Naive thymus-derived CD4-positive, alpha-beta T cell (primary cell): ENCODE measurements at regions of chr12 and their contacts with region 1.

Region 1: DNA sequence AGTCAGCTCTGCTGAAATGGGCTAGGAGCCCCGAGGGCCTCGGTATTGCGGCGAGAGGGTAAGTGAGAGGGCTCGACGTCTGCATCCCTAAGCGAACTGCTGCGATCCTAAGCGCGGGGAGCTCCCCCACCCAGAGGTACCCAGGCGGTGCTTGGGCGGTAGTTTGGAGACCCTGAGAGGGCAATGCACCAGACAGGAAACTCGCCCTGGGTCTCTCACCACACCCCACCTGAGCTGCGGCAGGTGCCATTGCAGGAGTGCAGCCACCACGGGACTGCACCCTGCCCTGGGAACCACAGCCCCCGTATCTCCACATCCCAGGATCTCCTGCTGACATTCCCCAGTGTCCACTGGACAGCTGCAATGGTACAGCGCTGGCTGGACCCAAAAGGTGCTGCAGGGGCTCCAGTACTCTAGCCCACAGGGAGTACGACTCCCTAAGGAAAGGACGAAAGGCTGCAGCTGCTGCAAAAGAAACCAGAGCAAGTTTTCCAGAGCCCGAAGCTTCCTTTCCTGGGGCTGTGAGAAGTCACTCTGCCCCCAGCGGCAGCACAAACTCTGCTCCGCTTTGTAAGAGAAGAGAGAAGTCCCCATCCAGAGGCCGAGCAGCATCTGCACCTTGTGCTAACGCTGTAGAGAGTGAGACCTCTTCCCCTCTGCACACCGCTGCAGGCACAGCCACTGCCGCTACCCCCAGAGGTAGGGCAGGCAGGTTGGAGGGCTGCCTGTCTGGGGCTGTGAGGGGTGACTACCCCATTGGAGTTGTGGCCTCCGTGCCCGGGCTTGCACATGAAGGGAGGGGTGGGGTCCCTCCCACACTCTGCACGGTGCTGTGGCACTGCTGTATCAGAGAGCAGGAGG is 31.1 kb upstream of the MON2 start:
- DNase-seq: peak; percentile 8 to 38 (median 26)
- ATAC-seq: peak; percentile 77
- H3K4me3 ChIP-seq: peak overlapping the region; percentile 71
- H3K4me3 Mint-ChIP-seq: peak overlapping the region; percentile 79 to 93 (median 89)
- H3K27ac ChIP-seq: no peak overlapping the region
- H3K27ac Mint-ChIP-seq: peak overlapping the region in 3 of 9 donors; percentile 33 to 71 (median 36)
- H3K4me1 ChIP-seq: peaks cover 9 to 10% of the 10 kb centered on the region in 2 donors
- H3K4me1 Mint-ChIP-seq: peaks cover 9 to 24% (median 18%) of the 10 kb centered on the region in 7 donors
- H3K27me3 ChIP-seq: no peaks in the 10 kb centered on the region
- H3K27me3 Mint-ChIP-seq: peaks cover 19 to 67% (median 29%) of the 10 kb centered on the region in 5 donors

Region 2: DNA sequence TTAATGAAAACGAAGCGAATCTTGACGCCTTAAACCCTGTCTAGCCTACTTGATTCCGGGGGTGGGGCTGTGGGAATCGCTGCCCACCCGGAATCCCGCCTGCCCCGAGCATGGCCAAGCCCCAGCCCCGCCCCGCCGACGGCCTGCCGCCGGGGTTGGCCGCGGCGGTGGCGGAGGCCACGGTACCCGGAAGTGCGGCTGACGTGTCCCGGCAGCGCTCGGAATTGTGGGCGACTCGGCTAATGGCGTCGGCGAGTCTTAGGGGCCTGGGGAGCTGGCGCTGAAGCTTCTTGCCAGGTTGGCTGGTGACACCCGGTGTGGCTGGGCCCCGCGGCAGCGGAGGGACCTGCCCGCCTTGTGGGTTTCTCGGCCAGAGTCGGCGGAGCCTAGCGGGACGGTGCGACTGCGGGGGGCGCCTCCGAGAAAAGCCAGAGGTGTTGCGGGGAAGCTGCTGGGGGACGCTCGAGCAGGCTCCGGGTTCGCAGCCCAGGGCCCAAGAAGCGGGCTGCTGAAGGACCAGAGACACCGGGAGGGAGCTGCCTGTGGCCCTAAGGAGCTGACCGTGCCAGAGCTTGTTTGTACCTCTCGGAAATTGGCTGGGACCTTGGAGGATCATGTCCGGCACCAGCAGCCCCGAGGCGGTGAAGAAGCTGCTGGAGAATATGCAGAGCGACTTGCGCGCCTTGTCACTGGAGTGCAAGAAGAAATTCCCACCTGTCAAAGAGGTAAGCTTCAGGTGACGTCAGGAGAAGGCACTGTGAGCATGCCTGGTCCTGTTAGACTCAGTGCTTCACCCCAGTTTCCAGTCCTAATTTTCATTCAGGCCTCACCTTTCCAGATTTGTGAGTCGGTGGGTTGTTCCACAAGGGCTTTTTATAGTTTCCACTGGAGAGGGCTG is 31.3 kb after region 1 on chr12 and contains the start of gene MON2:
- CTCF ChIA-PET with region 1: interaction called, 11 read pairs
- POLR2A ChIA-PET with region 1: no interaction called
- intact Hi-C with region 1: loop called in 1 of 2 experiments (anchors 1 kb)
- DNase-seq: peak; percentile 79 to 89 (median 84)
- ATAC-seq: peak; percentile 98
- H3K4me3 ChIP-seq: peak within 1 kb of the TSS; percentile 90
- H3K4me3 Mint-ChIP-seq: peak within 1 kb of the TSS; percentile 85 to 99 (median 94)
- H3K27ac ChIP-seq: peak within 1 kb of the TSS; percentile 88
- H3K27ac Mint-ChIP-seq: peak within 1 kb of the TSS; percentile 86 to 98 (median 96)
- H3K4me1 ChIP-seq: peaks cover 8 to 17% of the 10 kb centered on the region in 2 donors
- H3K4me1 Mint-ChIP-seq: peaks cover 12 to 30% (median 21%) of the 10 kb centered on the region in 7 donors
- H3K27me3 ChIP-seq: peaks cover 0 to 4% of the 10 kb centered on the region in 2 donors
- H3K27me3 Mint-ChIP-seq: peaks cover 0 to 4% (median 3%) of the 10 kb centered on the region in 5 donors
- total RNA-seq, gene MON2: 50.0 to 96.3 (median 76.0) TPM

Region 3: GRCh38 chr12:62581288-62582064 is 145.9 kb after region 1 on chr12:
- CTCF ChIA-PET with region 1: interaction called, 4 read pairs
- POLR2A ChIA-PET with region 1: no interaction called
- intact Hi-C with region 1: loop called (anchors 1 kb)
- DNase-seq: peak in 6 of 9 donors; percentile 18 to 53 (median 34)
- ATAC-seq: peak; percentile 81
- H3K4me3 ChIP-seq: no peak overlapping the region
- H3K4me3 Mint-ChIP-seq: no peak overlapping the region
- H3K27ac ChIP-seq: no peak overlapping the region
- H3K27ac Mint-ChIP-seq: peak overlapping the region in 1 of 9 donors; percentile 21
- H3K4me1 ChIP-seq: no peaks in the 10 kb centered on the region
- H3K4me1 Mint-ChIP-seq: peaks cover 0 to 2% (median 0%) of the 10 kb centered on the region in 7 donors
- H3K27me3 ChIP-seq: no peaks in the 10 kb centered on the region
- H3K27me3 Mint-ChIP-seq: no peaks in the 10 kb centered on the region

Region 4: GRCh38 chr12:62799126-62799736 is 363.7 kb after region 1 on chr12:
- CTCF ChIA-PET with region 1: interaction called, 59 read pairs
- POLR2A ChIA-PET with region 1: no interaction called
- intact Hi-C with region 1: loop called (anchors 1 kb)
- DNase-seq: peak in 8 of 9 donors; percentile 5 to 53 (median 40)
- ATAC-seq: peak; percentile 81
- H3K4me3 ChIP-seq: no peak overlapping the region
- H3K4me3 Mint-ChIP-seq: no peak overlapping the region
- H3K27ac ChIP-seq: no peak overlapping the region
- H3K27ac Mint-ChIP-seq: no peak overlapping the region
- H3K4me1 ChIP-seq: no peaks in the 10 kb centered on the region
- H3K4me1 Mint-ChIP-seq: no peaks in the 10 kb centered on the region
- H3K27me3 ChIP-seq: no peaks in the 10 kb centered on the region
- H3K27me3 Mint-ChIP-seq: peaks cover 0 to 14% (median 0%) of the 10 kb centered on the region in 5 donors

Region 5: GRCh38 chr12:62848421-62848820 is 412.9 kb after region 1 on chr12:
- CTCF ChIA-PET with region 1: no interaction called
- POLR2A ChIA-PET with region 1: no interaction called
- intact Hi-C with region 1: no loop called
- DNase-seq: no peak
- ATAC-seq: peak; percentile 16
- H3K4me3 ChIP-seq: no peak overlapping the region
- H3K4me3 Mint-ChIP-seq: no peak overlapping the region
- H3K27ac ChIP-seq: no peak overlapping the region
- H3K27ac Mint-ChIP-seq: no peak overlapping the region
- H3K4me1 ChIP-seq: no peaks in the 10 kb centered on the region
- H3K4me1 Mint-ChIP-seq: no peaks in the 10 kb centered on the region
- H3K27me3 ChIP-seq: no peaks in the 10 kb centered on the region
- H3K27me3 Mint-ChIP-seq: peaks cover 6 to 17% (median 12%) of the 10 kb centered on the region in 5 donors

Region 6: DNA sequence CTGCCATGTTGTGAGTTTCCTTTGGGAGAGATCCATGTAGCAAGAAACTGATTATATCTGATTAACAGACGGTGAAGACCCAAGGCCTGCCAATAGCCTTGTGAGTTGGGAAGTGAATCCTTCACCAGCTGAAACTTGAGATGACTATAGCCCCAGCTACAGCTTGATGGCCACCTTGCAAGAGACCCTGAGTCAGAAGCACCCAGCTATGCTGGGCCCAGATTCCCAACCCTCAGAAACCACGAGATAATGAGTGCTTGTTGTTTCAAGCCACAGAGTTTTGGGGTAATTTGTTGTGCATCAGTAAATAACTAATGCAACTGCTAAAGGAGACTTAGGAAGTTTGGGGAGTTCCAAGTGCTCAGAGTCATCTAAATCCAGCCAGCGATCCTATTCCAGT is 635.2 kb after region 1 on chr12:
- CTCF ChIA-PET with region 1: no interaction called
- POLR2A ChIA-PET with region 1: no interaction called
- intact Hi-C with region 1: loop called in 1 of 2 experiments (anchors 5 kb)
- DNase-seq: no peak
- ATAC-seq: no peak
- H3K4me3 ChIP-seq: no peak overlapping the region
- H3K4me3 Mint-ChIP-seq: no peak overlapping the region
- H3K27ac ChIP-seq: no peak overlapping the region
- H3K27ac Mint-ChIP-seq: no peak overlapping the region
- H3K4me1 ChIP-seq: no peaks in the 10 kb centered on the region
- H3K4me1 Mint-ChIP-seq: no peaks in the 10 kb centered on the region
- H3K27me3 ChIP-seq: no peaks in the 10 kb centered on the region
- H3K27me3 Mint-ChIP-seq: peaks cover 0 to 12% (median 0%) of the 10 kb centered on the region in 5 donors